HepG2 (cell line): ENCODE measurements at regions of chr11 and their contacts with region 1.

Region 1: GRCh38 chr11:67391304-67392132 is at the start of gene RAD9A:
- DNase-seq: peak; percentile 90
- ATAC-seq: peak; percentile 86
- H3K4me3 ChIP-seq: peak within 1 kb of the TSS; percentile 74 to 85 (median 78)
- H3K27ac ChIP-seq: peak within 1 kb of the TSS; percentile 82
- H3K4me1 ChIP-seq: peaks cover 43% of the 10 kb centered on the region
- H3K27me3 ChIP-seq: peaks cover 1 to 9% of the 10 kb centered on the region in 2 experiments; a peak in 3 of 5 replicates
- CTCF ChIP-seq: peak; percentile 26; the same call in 1 of the 2 replicates
- EP300 ChIP-seq: no peak
- POLR2A ChIP-seq: peak; percentile 84 to 95
- RAD21 ChIP-seq: 0 out of 2 replicates have a peak, but pooled peaks have one; percentile 34
- total RNA-seq, gene RAD9A: 6.1 and 10.1 TPM in 2 replicates

Region 2: DNA sequence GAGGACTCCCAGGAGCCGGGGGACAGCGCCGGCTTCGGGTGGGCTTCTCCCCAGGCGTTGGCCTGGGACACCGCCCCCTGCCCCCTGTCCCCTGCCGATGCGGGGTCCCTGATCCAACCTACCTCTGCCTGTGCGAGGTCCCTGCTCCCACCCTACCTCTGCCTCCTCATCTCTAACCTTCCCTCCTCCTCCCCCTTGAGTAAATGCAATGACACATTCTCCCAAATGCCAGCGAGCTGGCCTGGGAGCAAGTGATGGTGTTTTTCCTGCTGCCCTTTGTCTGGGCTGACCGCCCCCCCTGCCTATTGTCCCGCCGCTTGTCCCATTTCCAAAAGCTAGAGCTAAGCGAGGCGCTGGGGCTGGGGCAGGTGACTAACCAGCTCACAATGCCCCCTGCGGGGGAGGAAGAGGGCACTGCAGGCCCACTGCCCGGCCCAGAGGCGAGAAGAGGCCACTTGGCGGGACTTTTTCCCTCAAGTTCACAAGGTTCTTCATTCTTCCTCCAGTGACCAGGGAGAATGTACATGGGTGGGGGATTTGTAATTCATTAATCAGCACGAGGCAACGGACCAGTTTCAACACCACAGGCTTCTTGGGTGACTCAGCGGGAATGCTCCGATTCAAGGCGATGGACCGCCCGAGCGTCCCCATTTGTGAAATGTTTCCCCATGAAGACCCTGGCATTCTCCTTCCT is 17.4 kb before region 1 on chr11:
- CTCF ChIA-PET with region 1: no interaction called
- POLR2A ChIA-PET with region 1: interaction called, 10 read pairs
- in situ Hi-C with region 1: no loop called
- intact Hi-C with region 1: no loop called
- DNase-seq: peak; percentile 82
- ATAC-seq: peak; percentile 65
- H3K4me3 ChIP-seq: peak overlapping the region; percentile 69 to 75 (median 75)
- H3K27ac ChIP-seq: no peak overlapping the region
- H3K4me1 ChIP-seq: peaks cover 32% of the 10 kb centered on the region
- H3K27me3 ChIP-seq: peaks cover 3 to 8% of the 10 kb centered on the region in 2 experiments; a peak in 3 of 5 replicates
- CTCF ChIP-seq: peak; percentile 72
- EP300 ChIP-seq: peak in 1 of 2 experiments; percentile 5; a peak in 1 of 4 replicates
- POLR2A ChIP-seq: no peak
- RAD21 ChIP-seq: peak; percentile 38

Region 3: GRCh38 chr11:67428052-67428914 is 36.8 kb after region 1 on chr11 and contains the start of gene RPS6KB2:
- CTCF ChIA-PET with region 1: no interaction called
- POLR2A ChIA-PET with region 1: interaction called, 10 read pairs
- in situ Hi-C with region 1: no loop called
- intact Hi-C with region 1: no loop called
- DNase-seq: peak; percentile 93
- ATAC-seq: peak; percentile 81
- H3K4me3 ChIP-seq: peak within 1 kb of the TSS; percentile 84 to 98 (median 90)
- H3K27ac ChIP-seq: peak within 1 kb of the TSS; percentile 85
- H3K4me1 ChIP-seq: peaks cover 36% of the 10 kb centered on the region
- H3K27me3 ChIP-seq: no peaks in the 10 kb centered on the region; a peak in 1 of 5 replicates
- CTCF ChIP-seq: no peak
- EP300 ChIP-seq: peak in 1 of 2 experiments; percentile 32; a peak in 1 of 4 replicates
- POLR2A ChIP-seq: peak; percentile 80
- RAD21 ChIP-seq: no peak
- total RNA-seq, gene RPS6KB2: 35.3 and 54.8 TPM in 2 replicates

Region 4: GRCh38 chr11:67468835-67469811 is 77.6 kb after region 1 on chr11 and contains the start of gene TMEM134:
- CTCF ChIA-PET with region 1: no interaction called
- POLR2A ChIA-PET with region 1: interaction called, 10 read pairs
- in situ Hi-C with region 1: no loop called
- intact Hi-C with region 1: no loop called
- DNase-seq: peak; percentile 81
- ATAC-seq: peak; percentile 79
- H3K4me3 ChIP-seq: peak within 1 kb of the TSS; percentile 81 to 87 (median 81)
- H3K27ac ChIP-seq: peak within 1 kb of the TSS; percentile 56
- H3K4me1 ChIP-seq: peaks cover 69% of the 10 kb centered on the region
- H3K27me3 ChIP-seq: no peaks in the 10 kb centered on the region
- CTCF ChIP-seq: peak; percentile 90
- EP300 ChIP-seq: peak in 1 of 2 experiments; percentile 26; a peak in 2 of 4 replicates
- POLR2A ChIP-seq: peak; percentile 73 to 83
- RAD21 ChIP-seq: peak; percentile 89
- total RNA-seq, gene TMEM134: 5.1 and 6.9 TPM in 2 replicates

Region 5: DNA sequence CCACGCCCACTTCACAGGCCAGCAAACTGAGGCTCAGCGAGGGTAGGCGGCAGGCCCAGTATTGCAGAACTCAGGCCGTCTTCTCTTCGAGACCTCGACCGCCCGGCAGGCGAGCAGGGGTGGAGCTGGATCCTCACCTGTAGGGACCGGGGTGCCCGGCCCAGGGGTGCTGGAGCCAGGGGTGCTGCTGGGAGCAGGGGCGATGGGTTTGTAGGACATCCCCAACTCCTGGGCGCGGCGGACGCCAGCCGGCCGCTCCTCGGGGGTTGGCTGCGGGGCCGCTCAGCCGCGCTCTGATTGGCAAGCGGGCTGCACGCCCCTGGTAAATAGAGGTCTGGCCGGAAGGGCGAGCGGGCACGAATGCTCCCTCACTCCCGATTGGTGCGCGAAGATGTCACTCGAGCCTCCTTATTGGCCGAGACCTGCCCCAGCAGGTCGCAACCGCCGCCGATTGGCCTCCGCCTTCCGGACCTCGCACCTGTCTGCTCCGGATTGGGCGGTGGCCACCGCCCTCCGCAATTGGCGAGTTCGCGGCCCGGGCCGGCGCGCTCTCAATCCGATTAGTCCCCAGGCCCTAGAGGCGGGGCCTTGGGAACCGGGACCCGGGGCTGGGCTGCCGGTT is 116.5 kb after region 1 on chr11 and contains the start of gene CDK2AP2:
- CTCF ChIA-PET with region 1: interaction called, 18 read pairs
- POLR2A ChIA-PET with region 1: interaction called, 3 read pairs
- in situ Hi-C with region 1: no loop called
- intact Hi-C with region 1: loop called (anchors 1 kb)
- DNase-seq: peak; percentile 98
- ATAC-seq: peak; percentile 85
- H3K4me3 ChIP-seq: peak within 1 kb of the TSS; percentile 74 to 98 (median 91)
- H3K27ac ChIP-seq: peak within 1 kb of the TSS; percentile 96
- H3K4me1 ChIP-seq: peaks cover 56% of the 10 kb centered on the region
- H3K27me3 ChIP-seq: no peaks in the 10 kb centered on the region
- CTCF ChIP-seq: peak; percentile 24; the same call in 1 of the 2 replicates
- EP300 ChIP-seq: no peak
- POLR2A ChIP-seq: no peak; a peak in 1 of 4 replicates
- RAD21 ChIP-seq: no peak
- total RNA-seq, gene CDK2AP2: 19.7 and 23.2 TPM in 2 replicates